Dendritic cell treated with granulocyte-macrophage colony-stimulating factor and Interleukin-4, amounts not matched to agents 40 ng/mL and 50 ng/mL, for 4 days (primary cell): ENCODE measurements at regions of chr19 and their contacts with region 1.

Region 1: GRCh38 chr19:925526-926322 is at the start of gene ARID3A:
- H3K4me3 Mint-ChIP-seq: peak within 1 kb of the TSS; percentile 86
- H3K27ac Mint-ChIP-seq: peak within 1 kb of the TSS; percentile 85
- H3K4me1 Mint-ChIP-seq: peaks cover 57% of the 10 kb centered on the region
- H3K27me3 Mint-ChIP-seq: peaks cover 17% of the 10 kb centered on the region

Region 2: GRCh38 chr19:271856-272255 is 653.9 kb before region 1 on chr19:
- intact Hi-C with region 1: no loop called
- H3K4me3 Mint-ChIP-seq: no peak overlapping the region
- H3K27ac Mint-ChIP-seq: no peak overlapping the region
- H3K4me1 Mint-ChIP-seq: peaks cover 7% of the 10 kb centered on the region
- H3K27me3 Mint-ChIP-seq: peaks cover 30% of the 10 kb centered on the region

Region 3: DNA sequence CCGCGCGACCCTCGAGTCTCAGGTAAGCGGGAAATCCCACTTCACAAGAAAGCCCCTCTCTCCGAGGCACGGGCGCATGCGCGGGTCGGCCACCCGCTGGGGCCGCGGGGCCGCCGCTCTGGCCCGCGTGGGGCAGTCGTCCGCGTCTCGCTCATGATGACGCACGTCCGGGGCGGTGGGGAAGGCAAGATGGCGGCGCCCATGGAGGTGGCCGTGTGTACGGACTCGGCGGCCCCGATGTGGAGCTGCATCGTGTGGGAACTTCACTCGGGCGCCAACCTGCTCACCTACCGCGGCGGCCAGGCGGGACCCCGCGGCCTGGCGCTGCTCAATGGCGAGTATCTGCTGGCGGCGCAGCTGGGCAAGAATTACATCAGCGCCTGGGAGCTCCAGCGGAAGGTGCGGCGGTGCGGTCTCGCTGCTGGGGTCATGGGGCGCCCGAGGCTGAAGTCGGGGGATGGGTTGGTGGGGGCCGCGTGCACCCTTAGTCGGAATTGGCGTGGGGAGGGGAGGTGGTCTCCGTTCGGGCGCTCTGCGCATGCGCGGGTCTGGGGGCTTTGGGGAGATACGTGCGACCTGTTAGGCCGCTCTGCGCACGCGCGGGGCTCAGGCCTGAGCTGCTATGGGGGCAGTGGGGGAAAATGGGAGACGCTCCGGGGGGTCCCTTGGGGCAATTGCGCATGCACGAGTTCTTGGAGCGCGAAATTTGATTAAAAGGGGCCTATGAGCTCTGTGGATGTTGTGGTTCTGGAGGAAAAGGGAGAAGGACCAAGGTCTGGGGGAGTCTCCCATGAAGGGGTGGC is 58.6 kb after region 1 on chr19 and contains the start of gene WDR18:
- intact Hi-C with region 1: loop called (anchors 1 kb)
- H3K4me3 Mint-ChIP-seq: peak within 1 kb of the TSS; percentile 92
- H3K27ac Mint-ChIP-seq: peak within 1 kb of the TSS; percentile 95
- H3K4me1 Mint-ChIP-seq: peaks cover 52% of the 10 kb centered on the region
- H3K27me3 Mint-ChIP-seq: no peaks in the 10 kb centered on the region

Region 4: DNA sequence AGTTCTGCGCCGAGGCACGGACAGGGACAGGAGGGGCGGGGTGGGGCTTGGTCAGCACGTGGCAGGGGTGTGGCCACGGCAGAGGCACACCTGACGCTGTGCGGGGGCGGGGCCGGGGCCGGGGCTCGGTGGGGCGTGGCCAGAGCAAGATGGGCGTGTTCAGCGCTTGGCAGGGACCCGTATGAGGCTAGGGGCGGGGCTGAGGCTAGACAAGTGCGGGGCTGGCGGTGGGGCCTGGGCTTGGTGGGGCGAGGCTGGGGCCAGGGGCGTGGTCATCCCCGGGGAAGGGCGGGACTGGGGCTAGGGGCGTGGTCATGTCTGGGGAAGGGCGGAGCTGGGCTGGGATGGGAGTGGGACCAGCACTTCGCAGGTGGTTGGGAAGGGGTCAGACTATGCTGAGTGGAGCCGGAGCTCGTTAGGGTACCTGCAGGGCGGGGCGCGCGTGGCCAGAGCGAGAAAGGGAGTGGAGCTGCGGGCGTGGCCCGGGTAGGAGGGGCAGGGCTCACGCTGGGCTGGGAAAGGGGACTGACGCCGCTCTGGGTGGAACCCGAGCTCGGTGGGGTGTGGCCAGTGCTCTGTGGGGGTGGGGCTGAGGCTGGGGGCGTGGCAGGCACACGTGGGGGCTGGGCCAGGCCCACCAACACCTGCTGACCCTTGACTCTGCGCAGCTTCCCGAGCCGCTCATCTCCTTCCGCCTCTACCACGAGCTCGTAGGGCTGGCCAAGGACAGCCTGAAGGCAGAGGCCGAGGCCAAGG is 156.6 kb after region 1 on chr19:
- intact Hi-C with region 1: no loop called
- H3K4me3 Mint-ChIP-seq: peak overlapping the region; percentile 59
- H3K27ac Mint-ChIP-seq: peak overlapping the region; percentile 86
- H3K4me1 Mint-ChIP-seq: peaks cover 76% of the 10 kb centered on the region
- H3K27me3 Mint-ChIP-seq: no peaks in the 10 kb centered on the region

Region 5: DNA sequence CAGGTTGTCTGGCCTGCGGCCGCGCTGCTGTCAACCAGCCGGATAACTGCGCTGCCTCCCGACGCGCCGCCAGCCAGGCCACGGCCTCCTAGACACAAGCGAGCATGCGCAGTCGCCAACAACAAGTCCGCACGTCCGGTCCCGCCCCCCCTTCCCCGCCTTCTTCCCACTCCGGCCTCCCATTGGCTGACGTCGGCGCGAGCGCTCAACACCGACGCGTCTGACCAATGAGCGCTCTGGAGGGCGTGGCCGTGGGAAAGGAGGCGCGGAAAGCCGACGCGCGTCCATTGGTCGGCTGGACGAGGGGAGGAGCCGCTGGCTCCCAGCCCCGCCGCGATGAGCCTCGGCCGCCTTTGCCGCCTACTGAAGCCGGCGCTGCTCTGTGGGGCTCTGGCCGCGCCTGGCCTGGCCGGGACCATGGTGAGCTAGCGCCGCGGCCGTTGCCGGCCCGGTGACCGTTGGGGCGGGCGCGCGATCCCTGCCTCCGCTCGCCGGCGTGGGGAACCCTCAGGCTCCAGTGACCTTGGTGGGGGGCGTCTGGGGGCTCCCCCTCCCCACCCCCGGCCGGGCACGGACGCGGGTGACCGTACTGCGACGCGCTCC is 178.1 kb after region 1 on chr19 and contains the start of gene GPX4:
- intact Hi-C with region 1: no loop called
- H3K4me3 Mint-ChIP-seq: peak within 1 kb of the TSS; percentile 80
- H3K27ac Mint-ChIP-seq: peak within 1 kb of the TSS; percentile 93
- H3K4me1 Mint-ChIP-seq: peaks cover 60% of the 10 kb centered on the region
- H3K27me3 Mint-ChIP-seq: no peaks in the 10 kb centered on the region